GM10248 (cell line): ENCODE measurements at regions of chr4 and their contacts with region 1.

Region 1: GRCh38 chr4:74543231-74543670 is 98.3 kb downstream of the AREG start:
- DNase-seq: peak; percentile 8
- CTCF ChIP-seq: no peak

Region 2: DNA sequence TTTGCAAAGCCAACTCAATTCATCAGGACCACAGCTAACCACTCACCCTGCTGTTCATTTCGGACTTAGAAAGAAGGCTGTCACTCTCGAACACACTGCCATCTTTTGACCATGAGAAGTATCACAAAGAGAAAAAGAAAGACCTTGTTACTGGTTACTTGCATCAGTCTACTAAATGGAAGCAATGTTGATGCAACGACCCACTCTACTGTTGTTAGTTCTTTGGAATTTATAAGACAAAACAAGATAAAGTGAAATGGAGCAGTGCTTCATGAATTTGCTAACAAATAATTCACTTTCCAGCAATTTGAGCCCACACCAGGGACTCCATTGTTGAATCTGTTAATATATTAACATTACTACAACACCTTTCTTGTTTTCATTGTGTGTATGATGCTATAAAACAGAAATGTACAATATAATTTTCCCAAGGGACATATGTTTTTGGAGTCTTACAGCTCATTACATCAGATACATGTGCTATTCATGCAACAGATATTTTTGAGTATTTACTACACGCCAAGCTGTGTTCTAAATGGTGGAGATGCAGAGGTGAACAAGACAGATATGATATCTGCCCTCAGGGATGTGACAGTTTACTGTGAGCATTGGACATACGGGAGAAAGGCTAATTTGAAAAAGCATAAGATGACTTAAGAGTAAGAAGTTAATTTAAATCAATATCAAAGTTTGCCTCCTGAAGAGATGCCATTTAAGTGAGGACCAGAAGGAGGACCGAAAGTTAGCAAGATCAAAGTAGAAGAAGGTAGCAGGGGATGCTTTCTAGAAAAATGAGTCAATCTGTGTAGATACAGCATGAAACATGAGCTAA is 11.1 kb before region 1 on chr4:
- CTCF ChIA-PET with region 1: interaction called, 19 read pairs
- POLR2A ChIA-PET with region 1: no interaction called
- DNase-seq: peak; percentile 10
- CTCF ChIP-seq: peak; percentile 28